ENCODE measurements at regions of chr7 and their contacts with region 1.

Region 1: GRCh38 chr7:80428161-80429054 is 83.5 kb downstream of the GNAT3 start:
- DNase-seq: no peak
- ATAC-seq: peak; percentile 89

Region 2: GRCh38 chr7:79664884-79665676 is 763.3 kb before region 1 on chr7:
- intact Hi-C with region 1: no loop called
- DNase-seq: no peak
- ATAC-seq: no peak

Region 3: DNA sequence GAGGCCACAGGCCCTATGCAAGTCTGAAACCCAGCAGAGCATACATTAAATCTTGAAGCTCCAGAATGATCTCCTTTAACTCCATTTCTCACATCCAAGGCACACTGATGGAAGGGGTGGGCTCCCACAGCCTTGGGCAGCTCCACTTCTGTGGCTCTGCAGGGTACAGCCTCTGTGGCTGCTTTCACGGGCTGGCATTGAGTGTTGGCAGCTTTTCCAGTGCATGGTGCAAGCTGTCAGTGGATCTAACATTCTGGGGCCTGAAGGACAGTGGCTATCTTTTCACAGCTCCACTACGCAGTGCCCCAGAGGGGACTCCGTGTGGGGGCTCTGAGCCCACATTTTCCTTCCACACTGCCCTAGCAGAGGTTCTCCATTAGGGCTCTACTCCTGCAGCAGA is 709.2 kb before region 1 on chr7:
- intact Hi-C with region 1: no loop called
- DNase-seq: no peak
- ATAC-seq: no peak

Region 4: GRCh38 chr7:80393786-80394185 is 34.6 kb before region 1 on chr7:
- intact Hi-C with region 1: no loop called
- DNase-seq: no peak
- ATAC-seq: no peak

Region 5: DNA sequence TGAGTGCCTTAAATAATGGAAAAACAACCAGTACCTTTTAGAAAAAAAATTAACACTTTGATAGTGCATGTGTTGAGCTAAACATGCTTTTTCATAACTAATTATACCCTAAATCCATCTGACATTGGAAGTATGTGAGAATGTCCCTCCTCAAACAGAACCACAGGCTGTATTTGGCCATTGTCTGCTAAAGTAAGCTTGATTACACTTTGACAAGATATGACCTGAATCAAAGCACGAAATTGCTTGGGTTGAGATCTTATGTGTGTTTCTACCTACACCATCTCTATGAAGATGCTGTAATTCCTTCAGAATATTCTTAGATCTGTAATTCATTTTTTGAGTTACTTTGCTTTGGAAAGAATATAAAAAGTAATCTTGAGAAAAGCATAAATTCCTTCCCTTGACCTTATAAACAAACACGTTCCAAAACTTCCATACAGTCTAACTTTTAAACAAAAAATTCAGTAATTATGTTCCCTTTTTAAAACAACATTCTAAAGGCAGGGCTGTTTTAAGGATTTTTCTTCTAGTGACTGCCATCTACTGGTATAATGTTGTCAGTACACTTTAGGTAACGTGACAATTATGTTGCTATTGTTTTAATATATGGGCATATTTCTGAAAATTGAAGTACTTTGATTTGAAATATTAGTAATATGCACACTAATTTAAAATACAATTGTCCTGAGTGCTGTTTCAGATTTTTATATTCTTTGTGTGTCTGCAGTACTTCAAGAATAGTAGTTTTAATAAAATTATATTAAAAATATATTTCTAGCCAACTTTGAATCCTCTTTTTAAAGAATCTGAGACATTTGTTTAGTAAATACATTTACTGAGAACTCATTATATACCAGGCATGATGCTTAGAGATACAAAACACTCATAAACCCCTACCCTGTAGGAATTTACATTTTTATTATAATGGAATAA is 231.0 kb after region 1 on chr7:
- intact Hi-C with region 1: loop called in 1 of 2 experiments (anchors 2 kb)
- DNase-seq: no peak
- ATAC-seq: no peak

Region 6: GRCh38 chr7:81013083-81013817 is 584.8 kb after region 1 on chr7:
- intact Hi-C with region 1: no loop called
- DNase-seq: no peak
- ATAC-seq: no peak

Measured in left colon (tissue), 2 donors.